ENCODE measurements at regions of chr2 and their contacts with region 1.

Region 1: GRCh38 chr2:164841719-164842623 is at the start of gene COBLL1:
- DNase-seq: peak; percentile 88
- ATAC-seq: peak; percentile 84
- total RNA-seq, gene COBLL1: 15.2 TPM

Region 2: DNA sequence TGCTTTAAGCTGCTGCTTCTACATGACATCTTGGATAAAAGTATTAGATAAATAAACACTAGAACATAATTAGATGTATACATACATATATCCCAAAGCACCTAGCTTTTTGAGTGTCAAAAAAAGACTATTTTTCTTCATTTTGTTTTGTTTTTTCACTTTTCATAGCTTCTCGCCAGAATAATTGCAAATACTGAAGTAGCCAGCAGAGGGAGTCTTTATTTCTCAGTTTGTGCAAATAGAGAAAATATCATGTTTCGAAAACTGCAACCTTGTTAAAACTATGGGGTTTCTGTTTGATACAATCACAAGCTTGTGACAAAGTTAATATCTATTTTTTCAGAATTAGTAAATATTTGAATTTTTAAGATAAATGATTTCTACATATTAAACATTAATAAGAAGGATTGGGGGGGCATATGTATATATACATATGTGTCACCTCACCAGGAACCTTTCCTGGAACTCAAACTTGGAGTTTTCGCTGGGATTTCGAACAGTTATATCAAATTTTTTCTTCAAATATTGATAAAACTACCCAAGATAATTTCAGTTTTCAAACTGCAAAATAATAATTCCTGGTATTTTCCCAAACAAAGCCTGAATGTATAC is 281.7 kb before region 1 on chr2:
- intact Hi-C with region 1: loop called (anchors 5 kb)
- DNase-seq: no peak
- ATAC-seq: no peak

Region 3: GRCh38 chr2:164737612-164738081 is 104.3 kb before region 1 on chr2:
- intact Hi-C with region 1: loop called (anchors 2 kb)
- DNase-seq: no peak
- ATAC-seq: peak; percentile 72

Region 4: GRCh38 chr2:164782323-164782722 is 59.6 kb before region 1 on chr2:
- intact Hi-C with region 1: loop called (anchors 5 kb)
- DNase-seq: no peak
- ATAC-seq: peak; percentile 95

Region 5: DNA sequence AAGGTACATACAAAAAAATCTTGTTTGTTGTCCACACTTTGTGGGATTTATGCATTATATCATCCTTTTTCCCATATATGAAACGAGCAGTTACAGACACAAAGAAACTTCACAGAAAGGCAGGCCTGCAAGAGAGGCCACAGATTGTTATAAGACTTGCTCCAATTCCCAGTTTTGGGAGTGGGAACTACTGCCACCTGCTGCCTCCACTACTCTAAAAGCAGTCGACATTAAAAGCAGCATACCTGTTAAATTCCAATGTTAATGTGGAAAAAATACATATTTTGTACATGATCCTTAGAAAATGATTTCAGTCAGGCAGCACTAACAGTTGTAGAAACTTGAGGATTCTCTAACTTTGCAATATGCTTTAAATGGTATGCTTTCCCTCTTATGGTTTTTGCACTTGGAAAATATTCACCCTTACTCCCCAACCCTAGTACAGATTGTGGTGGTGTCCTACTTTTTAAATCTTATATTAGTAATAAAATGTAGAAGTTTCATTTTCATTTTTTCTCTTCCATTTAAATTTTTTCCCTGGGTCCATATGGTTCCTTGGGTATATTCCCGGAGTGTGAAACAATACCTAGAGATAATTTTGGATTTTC is 75.4 kb after region 1 on chr2:
- intact Hi-C with region 1: loop called (anchors 2 kb)
- DNase-seq: no peak
- ATAC-seq: peak; percentile 64